ENCODE measurements at regions of chr12 and their contacts with region 1.

Region 1: GRCh38 chr12:6195665-6196535 is 4.3 kb upstream of the CD9 start:
- DNase-seq: peak; percentile 84 to 99
- H3K4me3 ChIP-seq: no peak overlapping the region
- H3K27ac ChIP-seq: no peak overlapping the region
- H3K4me1 ChIP-seq: peaks cover 7 to 24% (median 15%) of the 10 kb centered on the region in 4 experiments
- H3K27me3 ChIP-seq: peaks cover 0 to 10% (median 6%) of the 10 kb centered on the region in 4 experiments; a peak in 3 of 7 replicates
- CTCF ChIP-seq: peak; percentile 83 to 98 (median 95)
- EP300 ChIP-seq: no peak
- POLR2A ChIP-seq: no peak
- RAD21 ChIP-seq: peak; percentile 91 to 95

Region 2: GRCh38 chr12:5965950-5966383 is 229.9 kb before region 1 on chr12:
- CTCF ChIA-PET with region 1: no interaction called
- POLR2A ChIA-PET with region 1: no interaction called
- DNase-seq: peak in 1 of 2 experiments; percentile 81
- H3K4me3 ChIP-seq: no peak overlapping the region
- H3K27ac ChIP-seq: no peak overlapping the region
- H3K4me1 ChIP-seq: peaks cover 5 to 14% (median 12%) of the 10 kb centered on the region in 4 experiments; a peak in 6 of 7 replicates
- H3K27me3 ChIP-seq: 0 out of 7 replicates have a peak, but pooled peaks cover 0 to 3% (median 0%) of the 10 kb centered on the region in 4 experiments
- CTCF ChIP-seq: peak; percentile 84 to 90 (median 88)
- EP300 ChIP-seq: no peak
- POLR2A ChIP-seq: no peak
- RAD21 ChIP-seq: peak; percentile 51 to 63

Region 3: GRCh38 chr12:6056406-6057240 is 139.3 kb before region 1 on chr12:
- CTCF ChIA-PET with region 1: interaction called, 12 read pairs
- POLR2A ChIA-PET with region 1: interaction called, 3 read pairs
- DNase-seq: peak; percentile 33 to 63
- H3K4me3 ChIP-seq: peak overlapping the region; percentile 38 to 62 (median 40)
- H3K27ac ChIP-seq: no peak overlapping the region
- H3K4me1 ChIP-seq: peaks cover 7 to 18% (median 16%) of the 10 kb centered on the region in 4 experiments
- H3K27me3 ChIP-seq: peaks cover 0 to 16% (median 10%) of the 10 kb centered on the region in 4 experiments; a peak in 5 of 7 replicates
- CTCF ChIP-seq: peak; percentile 58 to 66 (median 60)
- EP300 ChIP-seq: no peak
- POLR2A ChIP-seq: no peak
- RAD21 ChIP-seq: peak; percentile 25 to 56; a peak in 3 of 4 replicates

Region 4: GRCh38 chr12:6084261-6084968 is 111.5 kb before region 1 on chr12:
- CTCF ChIA-PET with region 1: interaction called, 13 read pairs
- POLR2A ChIA-PET with region 1: interaction called, 6 read pairs
- DNase-seq: peak in 1 of 2 experiments; percentile 56
- H3K4me3 ChIP-seq: peak overlapping the region in 3 of 4 experiments; percentile 8 to 27 (median 14); a peak in 3 of 8 replicates
- H3K27ac ChIP-seq: peak overlapping the region; percentile 66
- H3K4me1 ChIP-seq: peaks cover 10 to 19% (median 15%) of the 10 kb centered on the region in 4 experiments
- H3K27me3 ChIP-seq: no peaks in the 10 kb centered on the region
- CTCF ChIP-seq: no peak
- EP300 ChIP-seq: no peak
- POLR2A ChIP-seq: no peak
- RAD21 ChIP-seq: no peak; a peak in 1 of 4 replicates

Region 5: DNA sequence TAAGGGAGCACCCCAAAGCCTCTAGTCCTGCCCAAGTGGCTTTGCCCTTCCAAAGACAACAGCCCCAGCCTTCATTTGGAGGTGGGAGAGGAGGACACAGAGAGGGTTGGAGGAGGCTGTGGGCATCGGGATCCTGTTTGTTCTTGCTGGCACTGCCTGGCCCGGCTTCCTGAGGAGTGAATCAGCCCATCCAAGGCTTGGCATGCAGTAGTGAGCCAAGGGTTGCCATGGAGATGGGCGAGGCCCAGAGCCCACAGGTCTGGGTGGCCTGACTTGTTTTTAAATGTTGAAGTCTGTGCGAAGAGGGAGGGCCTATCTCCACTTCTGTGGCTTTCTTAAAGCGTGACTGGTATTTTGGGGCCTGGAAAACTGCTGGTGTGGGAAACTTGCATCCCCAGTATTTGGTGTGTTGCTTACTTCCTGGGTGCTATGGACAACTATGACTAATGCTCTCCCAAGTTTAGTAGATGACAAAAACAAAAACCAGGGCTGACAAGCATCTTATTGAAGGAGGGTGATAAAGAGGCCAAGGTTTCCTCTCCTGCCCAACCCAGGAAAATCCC is 20.1 kb after region 1 on chr12:
- CTCF ChIA-PET with region 1: interaction called, 130 read pairs
- POLR2A ChIA-PET with region 1: interaction called, 203 read pairs
- DNase-seq: no peak
- H3K4me3 ChIP-seq: peak overlapping the region in 1 of 4 experiments; percentile 23; a peak in 1 of 8 replicates
- H3K27ac ChIP-seq: peak overlapping the region; percentile 79
- H3K4me1 ChIP-seq: peaks cover 28 to 50% (median 43%) of the 10 kb centered on the region in 4 experiments
- H3K27me3 ChIP-seq: no peaks in the 10 kb centered on the region; a peak in 1 of 7 replicates
- CTCF ChIP-seq: no peak
- EP300 ChIP-seq: no peak
- POLR2A ChIP-seq: no peak
- RAD21 ChIP-seq: no peak

Region 6: GRCh38 chr12:6267139-6267721 is 71.3 kb after region 1 on chr12:
- CTCF ChIA-PET with region 1: interaction called, 433 read pairs
- POLR2A ChIA-PET with region 1: interaction called, 14 read pairs
- DNase-seq: no peak
- H3K4me3 ChIP-seq: no peak overlapping the region
- H3K27ac ChIP-seq: no peak overlapping the region
- H3K4me1 ChIP-seq: peaks cover 9 to 17% (median 13%) of the 10 kb centered on the region in 4 experiments
- H3K27me3 ChIP-seq: no peaks in the 10 kb centered on the region
- CTCF ChIP-seq: no peak
- EP300 ChIP-seq: no peak
- POLR2A ChIP-seq: no peak
- RAD21 ChIP-seq: no peak

Region 7: GRCh38 chr12:6285063-6285477 is 89.2 kb after region 1 on chr12:
- CTCF ChIA-PET with region 1: interaction called, 433 read pairs
- POLR2A ChIA-PET with region 1: interaction called, 5 read pairs
- DNase-seq: peak in 1 of 2 experiments; percentile 85
- H3K4me3 ChIP-seq: no peak overlapping the region
- H3K27ac ChIP-seq: no peak overlapping the region
- H3K4me1 ChIP-seq: peaks cover 0 to 5% (median 3%) of the 10 kb centered on the region in 4 experiments; a peak in 3 of 7 replicates
- H3K27me3 ChIP-seq: peaks cover 0 to 2% (median 0%) of the 10 kb centered on the region in 4 experiments; a peak in 2 of 7 replicates
- CTCF ChIP-seq: peak; percentile 83 to 92 (median 91)
- EP300 ChIP-seq: no peak
- POLR2A ChIP-seq: no peak
- RAD21 ChIP-seq: peak; percentile 98 to 99

Region 8: DNA sequence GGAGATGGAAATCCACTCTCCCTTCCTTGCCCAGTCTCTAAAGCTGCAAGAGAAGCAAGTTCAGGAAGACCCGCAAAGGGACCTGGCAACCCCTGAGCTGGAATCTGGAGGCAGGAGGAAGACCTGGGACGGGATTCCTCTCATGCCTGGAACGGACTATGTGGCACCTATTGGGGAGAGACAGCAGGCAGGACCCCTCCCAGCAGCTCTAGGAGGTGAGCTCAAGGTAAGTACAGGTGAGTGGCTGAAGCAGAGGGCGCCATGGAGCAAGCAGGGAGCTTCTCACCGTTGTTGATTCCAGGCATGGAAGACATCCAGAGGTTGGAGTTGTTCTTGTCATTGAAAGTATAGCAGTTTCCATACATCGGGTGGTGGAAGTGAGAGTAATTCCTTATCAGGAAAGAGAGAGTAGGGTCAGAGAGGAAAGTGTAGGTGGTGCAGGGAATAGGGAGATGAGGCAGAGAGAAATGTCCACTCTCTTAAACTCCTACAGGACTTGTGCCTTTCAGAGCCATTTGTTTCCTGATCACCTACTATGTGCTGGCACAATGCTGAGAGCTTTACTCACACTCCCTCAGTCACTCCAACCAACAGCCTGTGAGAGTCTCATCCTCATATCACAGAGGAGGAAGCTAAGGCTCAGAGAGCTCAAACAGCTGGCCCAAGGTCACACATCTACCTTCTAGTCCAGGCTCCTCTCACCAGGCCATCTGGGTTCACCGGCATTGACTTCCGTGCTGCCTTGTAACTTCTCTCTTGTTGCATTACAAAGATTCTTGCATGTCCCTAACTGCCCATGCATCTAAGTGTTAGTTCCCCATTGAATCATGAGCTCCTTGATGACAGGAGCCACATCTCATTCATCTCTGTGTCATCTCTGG is 159.8 kb after region 1 on chr12:
- CTCF ChIA-PET with region 1: no interaction called
- POLR2A ChIA-PET with region 1: no interaction called
- DNase-seq: peak; percentile 53 to 74
- H3K4me3 ChIP-seq: no peak overlapping the region
- H3K27ac ChIP-seq: no peak overlapping the region
- H3K4me1 ChIP-seq: peaks cover 0 to 9% (median 0%) of the 10 kb centered on the region in 4 experiments; a peak in 4 of 7 replicates
- H3K27me3 ChIP-seq: no peaks in the 10 kb centered on the region
- CTCF ChIP-seq: peak; percentile 50 to 72 (median 69)
- EP300 ChIP-seq: 0 out of 3 replicates have a peak, but pooled peaks of 1 of the 2 experiments have one; percentile 22
- POLR2A ChIP-seq: no peak
- RAD21 ChIP-seq: peak; percentile 43 to 60; a peak in 3 of 4 replicates

Region 9: DNA sequence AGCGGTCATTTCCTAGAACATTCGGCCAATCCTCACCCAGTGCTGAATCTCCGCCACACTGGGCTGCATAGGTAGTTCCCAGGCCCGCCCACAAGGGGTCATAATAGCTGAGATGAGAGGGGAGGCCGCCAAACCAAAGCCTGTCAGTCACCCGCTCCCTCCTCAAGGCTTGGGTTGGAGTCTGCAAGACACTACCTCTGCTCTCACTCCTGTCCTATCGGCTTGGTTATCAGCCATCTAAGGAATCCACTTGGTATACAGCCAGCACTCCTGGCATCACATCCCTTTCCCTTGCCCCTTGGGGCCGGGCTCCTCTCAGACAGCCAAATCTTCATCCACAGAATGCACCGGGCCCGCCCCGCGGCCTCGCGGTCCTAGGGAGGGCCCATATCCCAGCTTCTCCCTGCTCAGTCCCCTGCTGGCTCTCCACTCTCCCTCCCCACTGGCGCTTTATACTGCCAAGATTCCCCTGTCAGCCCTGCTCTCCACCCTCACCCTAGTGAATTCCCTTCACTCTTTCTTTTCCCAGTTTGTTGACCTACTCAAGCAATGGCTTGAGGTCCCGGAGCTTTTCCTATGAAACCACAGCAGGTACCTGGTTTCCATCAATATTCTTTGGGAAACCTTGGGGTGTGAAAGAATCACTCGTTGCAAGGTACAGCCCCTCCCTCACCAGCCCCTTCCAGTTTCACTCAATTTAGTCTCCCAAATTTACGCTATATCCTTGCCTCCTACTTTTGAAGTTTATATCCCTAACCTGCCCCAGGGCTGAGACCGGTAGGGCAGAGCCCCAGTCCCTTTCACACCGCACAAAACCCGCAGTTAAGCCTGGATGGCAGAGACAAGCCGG is 358.5 kb after region 1 on chr12:
- CTCF ChIA-PET with region 1: no interaction called
- POLR2A ChIA-PET with region 1: no interaction called
- DNase-seq: peak in 1 of 2 experiments; percentile 93
- H3K4me3 ChIP-seq: peak overlapping the region; percentile 70 to 87 (median 82)
- H3K27ac ChIP-seq: no peak overlapping the region
- H3K4me1 ChIP-seq: peaks cover 4 to 15% (median 9%) of the 10 kb centered on the region in 4 experiments
- H3K27me3 ChIP-seq: no peaks in the 10 kb centered on the region
- CTCF ChIP-seq: peak in 2 of 3 experiments; percentile 68 to 90; a peak in 3 of 4 replicates
- EP300 ChIP-seq: no peak
- POLR2A ChIP-seq: no peak
- RAD21 ChIP-seq: peak; percentile 31 to 47